Ascending aorta (tissue), 2 donors: ENCODE measurements at regions of chr12 and their contacts with region 1.

Region 1: DNA sequence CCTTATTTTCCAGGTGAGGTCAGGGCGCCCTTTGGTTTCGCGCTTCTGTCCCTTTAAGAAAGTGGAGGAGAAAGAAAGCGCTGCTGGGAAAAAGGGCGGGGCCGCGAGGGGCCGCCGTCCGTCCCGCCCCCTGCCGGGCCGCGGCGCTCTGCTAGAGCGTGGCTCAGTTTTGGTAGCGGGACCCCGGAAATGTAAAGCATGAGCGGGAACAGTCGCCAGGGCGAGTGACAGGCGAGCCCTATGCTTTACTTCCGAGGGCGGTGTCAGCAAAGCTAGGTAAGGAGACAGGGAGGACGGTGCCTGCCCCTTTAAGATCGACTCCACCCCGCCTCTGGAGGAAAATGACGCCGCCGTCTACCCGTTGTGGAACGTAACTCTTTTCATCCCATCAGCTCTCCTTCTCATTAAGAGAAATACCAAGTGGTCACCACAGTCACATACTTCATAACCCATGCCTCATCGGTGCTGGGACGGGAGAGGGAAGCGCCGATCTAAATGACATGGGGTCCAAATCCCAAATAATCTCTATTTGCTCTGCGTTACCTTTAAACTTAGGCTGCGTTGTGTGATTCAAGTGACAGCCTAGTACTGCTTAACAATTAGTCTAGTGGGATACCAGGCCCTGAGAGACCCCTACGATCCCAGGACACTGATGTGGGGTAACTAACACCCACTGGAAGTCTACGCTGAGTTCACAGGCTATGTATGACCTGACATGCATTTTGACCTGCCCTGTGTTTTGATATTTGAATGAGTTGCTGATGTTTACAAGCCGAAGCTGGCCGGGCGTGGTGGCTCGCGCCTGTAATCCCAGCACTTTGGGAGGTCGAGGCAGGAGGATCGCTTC is at the start of gene ETFBKMT:
- DNase-seq: peak; percentile 67 to 94
- H3K4me3 ChIP-seq: peak within 1 kb of the TSS; percentile 68 to 82
- H3K27ac ChIP-seq: peak within 1 kb of the TSS; percentile 87 to 95
- H3K4me1 ChIP-seq: peaks cover 0 to 3% of the 10 kb centered on the region in 2 donors
- H3K27me3 ChIP-seq: no peaks in the 10 kb centered on the region
- CTCF ChIP-seq: peak in 2 of 3 experiments; percentile 27 to 50
- total RNA-seq, gene ETFBKMT: 0.64 TPM

Region 2: GRCh38 chr12:31959161-31959700 is 299.9 kb after region 1 on chr12 and contains the start of gene RESF1:
- intact Hi-C with region 1: loop called (anchors 2 kb)
- DNase-seq: peak; percentile 64 to 93
- H3K4me3 ChIP-seq: peak within 1 kb of the TSS; percentile 82 to 85
- H3K27ac ChIP-seq: peak within 1 kb of the TSS; percentile 82 to 96
- H3K4me1 ChIP-seq: peaks cover 3 to 17% of the 10 kb centered on the region in 2 donors
- H3K27me3 ChIP-seq: no peaks in the 10 kb centered on the region
- CTCF ChIP-seq: no peak
- total RNA-seq, gene RESF1: 26.0 TPM

Region 3: GRCh38 chr12:32679091-32679919 is 1020.0 kb after region 1 on chr12 and contains the start of gene DNM1L:
- intact Hi-C with region 1: loop called (anchors 2 kb)
- DNase-seq: peak; percentile 81 to 97
- H3K4me3 ChIP-seq: peak within 1 kb of the TSS; percentile 82 to 84
- H3K27ac ChIP-seq: peak within 1 kb of the TSS; percentile 93 to 94
- H3K4me1 ChIP-seq: peaks cover 0 to 5% of the 10 kb centered on the region in 2 donors
- H3K27me3 ChIP-seq: no peaks in the 10 kb centered on the region
- CTCF ChIP-seq: no peak
- total RNA-seq, gene DNM1L: 50.9 TPM